Dorsolateral prefrontal cortex (tissue), 120 donors: ENCODE measurements at regions of chr20 and their contacts with region 1.

Region 1: DNA sequence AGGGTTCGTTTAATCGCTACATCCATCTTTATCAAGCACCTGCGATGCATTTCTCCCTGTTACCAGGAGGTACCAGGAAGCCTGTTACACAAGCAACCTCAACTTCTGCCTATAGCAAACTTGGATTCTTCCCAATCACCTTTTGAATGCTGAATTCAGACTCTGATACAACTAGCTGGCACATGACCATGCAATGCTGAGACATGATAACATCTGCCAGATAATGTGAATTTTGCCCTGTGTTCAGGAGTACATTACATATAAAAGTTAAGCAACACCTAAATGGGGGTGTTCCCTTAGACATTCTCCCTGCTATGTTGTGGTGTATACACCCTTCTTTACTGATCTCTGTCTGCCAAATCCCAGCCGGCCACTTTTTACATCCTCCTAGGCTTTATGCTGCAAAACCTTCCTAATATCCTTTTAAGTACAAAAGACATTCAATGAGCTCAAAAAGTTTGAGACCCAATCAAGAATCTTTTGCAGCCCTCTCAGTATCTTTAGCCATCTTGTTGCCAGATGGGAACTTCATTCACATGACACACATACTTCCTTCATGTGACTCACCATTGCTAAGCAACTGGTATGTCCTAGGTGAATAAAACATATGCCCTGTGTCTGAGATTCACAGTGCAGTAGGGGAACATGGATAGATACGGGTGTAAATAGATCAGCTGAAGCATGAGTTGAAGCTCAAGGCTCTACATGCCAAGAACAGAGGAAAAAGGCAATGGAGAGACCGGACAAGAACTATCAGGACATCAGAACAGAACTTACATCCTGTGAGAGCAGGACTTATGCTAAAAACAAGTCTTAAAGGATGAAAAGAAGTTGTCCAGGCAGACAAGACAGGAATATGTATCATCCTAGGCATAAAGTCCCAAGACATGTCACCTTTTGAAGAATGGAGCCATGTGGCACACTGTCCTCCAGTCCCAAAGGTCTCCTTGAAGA is 84.3 kb downstream of the ZHX3 start:
- DNase-seq: no peak
- H3K4me3 ChIP-seq: peak overlapping the region in 8 of 59 donors; percentile 5 to 39 (median 17)
- H3K27ac ChIP-seq: peak overlapping the region; percentile 73 to 97 (median 94)
- H3K27me3 ChIP-seq: no peaks in the 10 kb centered on the region
- CTCF ChIP-seq: no peak

Region 2: DNA sequence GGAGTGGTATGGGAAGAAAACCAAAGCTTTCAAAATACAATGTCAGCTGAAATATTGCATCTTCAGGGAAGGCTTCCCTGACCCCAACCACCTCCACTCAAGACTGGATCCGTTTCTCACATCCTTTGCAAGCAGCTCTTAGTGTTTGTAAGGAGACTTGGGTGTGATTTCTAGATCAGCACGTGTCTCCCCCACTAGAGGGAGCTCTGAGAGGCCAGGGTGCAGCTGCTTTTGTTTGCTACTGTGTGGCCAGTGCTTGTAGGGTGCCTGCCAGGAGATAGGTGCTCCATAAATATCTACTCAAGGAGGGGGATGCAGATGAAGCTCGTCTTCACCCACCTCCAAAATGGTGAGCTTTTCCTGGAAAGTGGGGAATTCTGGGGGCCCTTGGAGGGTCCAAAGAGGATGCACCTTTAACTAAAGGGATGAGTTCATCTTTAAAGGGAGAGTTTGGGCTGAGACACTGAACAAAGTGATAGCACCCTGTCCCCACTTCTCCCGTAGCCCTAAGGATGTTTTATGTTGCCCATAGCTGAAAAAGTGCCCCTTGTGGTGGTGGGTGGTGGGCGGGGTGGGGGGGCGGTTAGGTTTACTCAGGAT is 491.6 kb before region 1 on chr20:
- intact Hi-C with region 1: no loop called
- DNase-seq: peak in 1 of 10 donors; percentile 25
- H3K4me3 ChIP-seq: no peak overlapping the region
- H3K27ac ChIP-seq: no peak overlapping the region
- H3K27me3 ChIP-seq: peaks cover 0 to 34% (median 7%) of the 10 kb centered on the region in 45 donors
- CTCF ChIP-seq: peak in 53 of 56 donors; percentile 13 to 68 (median 52)

Region 3: DNA sequence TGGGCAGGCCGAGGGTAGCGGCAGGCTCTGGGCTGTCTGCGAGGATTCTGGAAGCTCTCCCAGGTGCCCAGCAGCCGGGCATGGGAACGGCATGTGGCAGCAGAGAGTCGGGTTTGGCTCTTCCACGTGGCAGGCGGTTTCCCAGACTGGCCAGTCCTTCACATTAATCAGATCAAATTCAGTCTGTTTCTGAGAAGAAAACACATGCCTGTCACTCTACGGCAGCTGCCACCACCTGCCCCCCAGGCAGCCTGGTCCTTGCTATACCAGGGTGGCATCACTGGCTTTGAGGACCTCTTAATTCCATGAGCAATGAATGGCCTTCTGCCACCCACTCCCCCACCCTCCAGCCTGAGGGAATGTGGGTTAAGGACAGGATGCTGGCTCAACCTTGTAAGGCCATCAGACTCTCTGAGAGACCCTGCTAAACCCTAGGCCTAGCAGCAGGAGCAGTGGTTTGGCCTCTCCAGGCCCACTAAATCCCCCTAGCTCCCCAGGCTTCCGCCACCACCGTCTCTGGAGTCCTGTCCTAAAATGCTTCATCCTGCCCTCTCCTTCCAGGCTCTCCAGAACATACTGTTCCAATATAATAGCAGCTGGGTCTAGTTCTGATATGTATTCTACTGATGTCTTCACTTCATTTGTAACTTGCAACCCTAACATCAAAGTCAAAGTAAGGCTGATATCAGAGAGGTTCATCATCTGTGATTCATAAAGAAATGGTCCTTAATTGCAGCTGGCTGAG is 48.1 kb before region 1 on chr20:
- intact Hi-C with region 1: loop called in 1 of 2 experiments (anchors 2 kb)
- DNase-seq: peak in 9 of 10 donors; percentile 57 to 83 (median 73)
- H3K4me3 ChIP-seq: no peak overlapping the region
- H3K27ac ChIP-seq: peak overlapping the region; percentile 37 to 96 (median 89)
- H3K27me3 ChIP-seq: no peaks in the 10 kb centered on the region
- CTCF ChIP-seq: peak in 55 of 56 donors; percentile 23 to 75 (median 59)

Region 4: DNA sequence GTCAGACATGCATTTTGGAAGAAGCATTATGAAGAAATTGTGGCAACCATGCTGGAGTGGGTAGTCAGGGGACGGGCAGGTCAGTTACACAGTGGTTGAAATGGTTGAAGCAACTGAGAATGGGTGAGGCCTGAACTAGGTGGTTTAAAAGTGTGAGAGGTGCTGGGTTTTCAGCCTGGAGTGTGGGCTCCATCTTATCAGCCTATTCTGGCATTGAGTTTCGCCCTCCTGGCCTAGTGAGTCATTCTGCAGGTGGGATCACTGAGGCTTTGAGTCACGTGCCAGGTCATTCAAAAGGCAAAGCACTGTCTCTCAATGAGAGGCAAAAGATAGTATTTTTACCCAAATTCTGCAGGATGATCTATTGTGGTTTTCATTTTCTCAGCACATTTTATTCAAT is 566.8 kb after region 1 on chr20:
- intact Hi-C with region 1: no loop called
- DNase-seq: no peak
- H3K4me3 ChIP-seq: no peak overlapping the region
- H3K27ac ChIP-seq: no peak overlapping the region
- H3K27me3 ChIP-seq: peaks cover 0 to 9% (median 0%) of the 10 kb centered on the region in 45 donors
- CTCF ChIP-seq: no peak